ENCODE measurements at regions of chr2 and their contacts with region 1.

Region 1: DNA sequence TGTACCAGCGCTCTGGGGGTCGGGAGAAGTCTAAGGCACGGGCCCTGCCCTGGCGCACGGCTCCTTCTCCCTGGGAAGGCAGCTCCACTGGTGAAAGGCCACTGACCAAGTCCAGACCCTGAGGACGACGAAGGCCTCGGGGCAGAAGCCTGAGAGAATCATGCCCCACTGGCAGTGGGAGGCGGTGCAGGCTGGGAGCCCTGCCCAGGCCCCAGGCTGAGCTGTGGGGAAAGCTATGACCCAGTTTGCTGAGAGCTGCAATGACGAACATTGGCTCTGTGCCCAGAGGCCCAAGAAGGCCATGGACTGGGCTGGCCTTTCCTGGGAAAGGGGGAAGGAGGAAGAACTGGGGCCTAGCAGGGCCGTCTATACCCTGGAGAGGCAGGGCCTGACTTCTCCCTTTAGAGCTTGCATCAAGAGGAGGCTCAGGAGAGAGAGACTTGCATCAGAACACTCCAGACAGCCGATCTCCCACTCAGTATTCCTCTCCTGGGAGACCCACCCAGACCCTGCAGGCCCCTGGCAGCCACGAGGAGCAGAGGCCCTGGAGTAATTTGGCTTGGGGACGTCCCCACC is 32.9 kb downstream of the HS1BP3 start:
- DNase-seq: peak; percentile 99 to 100
- H3K4me3 ChIP-seq: peak overlapping the region; percentile 1 to 2
- H3K27ac ChIP-seq: peak overlapping the region; percentile 97 to 99
- H3K4me1 ChIP-seq: peaks cover 16 to 81% (median 74%) of the 10 kb centered on the region in 4 donors
- H3K27me3 ChIP-seq: no peaks in the 10 kb centered on the region
- CTCF ChIP-seq: peak; percentile 77 to 83

Region 2: DNA sequence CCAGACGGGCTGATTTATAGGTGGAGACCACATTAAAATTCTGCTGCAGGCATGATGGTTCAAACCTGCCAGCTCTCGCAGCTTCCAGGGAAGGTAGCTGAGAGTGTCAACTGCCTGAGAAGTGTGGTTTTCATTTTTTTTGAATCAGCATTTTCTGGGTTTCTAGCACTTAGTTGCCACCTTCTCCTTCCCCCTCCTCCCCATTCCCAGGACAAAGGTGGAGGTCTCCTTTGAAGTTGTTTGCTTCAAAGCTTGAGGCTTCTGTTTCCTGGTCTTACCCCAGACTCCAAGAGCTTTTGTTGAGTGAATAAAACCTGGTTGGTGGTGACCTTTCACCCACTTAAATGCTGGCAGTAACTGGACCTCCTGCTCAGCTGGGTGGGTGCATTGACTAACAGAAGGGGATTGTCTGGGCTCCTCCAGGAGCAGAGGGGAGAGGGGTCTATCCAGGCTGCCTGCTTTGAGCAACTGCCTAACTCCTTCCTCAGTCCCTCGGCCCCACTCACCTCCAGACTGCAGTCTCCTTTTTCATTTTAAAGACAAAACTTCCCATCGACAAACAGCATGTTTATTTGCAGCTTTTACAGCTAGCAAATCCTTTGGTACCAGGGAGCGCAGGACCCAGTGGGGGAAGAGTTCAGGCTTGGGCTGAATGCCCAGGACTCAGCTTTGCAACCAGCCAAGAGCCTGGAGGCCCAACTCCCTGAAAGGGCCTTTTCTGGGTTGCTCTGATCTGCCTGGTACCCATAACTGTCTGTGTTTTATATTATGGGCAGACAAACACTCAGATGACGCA is 167.6 kb before region 1 on chr2:
- intact Hi-C with region 1: loop called (anchors 5 kb)
- DNase-seq: peak; percentile 82 to 93
- H3K4me3 ChIP-seq: peak overlapping the region; percentile 93 to 95
- H3K27ac ChIP-seq: peak overlapping the region; percentile 96 to 98
- H3K4me1 ChIP-seq: peaks cover 0 to 34% (median 24%) of the 10 kb centered on the region in 4 donors
- H3K27me3 ChIP-seq: peaks cover 0 to 3% of the 10 kb centered on the region in 2 donors
- CTCF ChIP-seq: no peak

Region 3: GRCh38 chr2:20635675-20636584 is 17.9 kb after region 1 on chr2:
- intact Hi-C with region 1: loop called (anchors 2 kb)
- DNase-seq: peak; percentile 90 to 95
- H3K4me3 ChIP-seq: peak overlapping the region in 1 of 2 donors; percentile 30
- H3K27ac ChIP-seq: peak overlapping the region; percentile 95 to 98
- H3K4me1 ChIP-seq: peaks cover 0 to 84% (median 57%) of the 10 kb centered on the region in 4 donors
- H3K27me3 ChIP-seq: no peaks in the 10 kb centered on the region
- CTCF ChIP-seq: peak; percentile 96